ENCODE measurements at regions of chr5 and their contacts with region 1.

Region 1: DNA sequence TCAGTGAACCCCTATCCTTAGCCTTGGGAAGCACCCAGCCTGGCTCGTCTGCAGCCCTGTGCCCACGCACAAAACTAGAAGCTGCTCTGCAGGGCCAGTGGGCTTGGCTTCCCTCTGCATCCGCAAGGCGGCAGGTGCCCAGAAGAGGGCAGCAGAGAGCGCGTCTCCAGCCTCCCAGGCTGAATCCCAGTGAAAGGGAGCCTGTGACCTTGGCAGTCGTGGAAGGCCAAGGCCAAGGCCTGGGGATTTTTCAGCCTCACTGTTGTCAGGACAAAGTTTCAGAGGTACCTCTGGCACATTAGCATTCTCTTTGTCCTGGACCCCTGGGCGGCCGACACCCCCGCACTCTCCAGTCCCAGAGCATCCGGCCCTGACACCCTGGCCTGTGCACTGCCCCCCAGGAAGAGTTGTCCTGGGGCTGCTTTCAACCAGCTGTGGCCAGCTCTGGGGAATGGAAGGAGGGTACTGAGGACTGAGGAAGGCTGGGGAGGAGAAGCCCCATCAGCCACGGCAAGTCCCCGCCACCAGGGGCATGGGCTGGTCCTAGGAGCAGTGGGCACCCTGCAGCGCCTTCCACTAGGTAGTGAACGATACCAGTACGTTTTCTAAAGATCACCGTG is 63.6 kb upstream of the IL17B start:
- DNase-seq: peak; percentile 44
- H3K4me3 ChIP-seq: no peak overlapping the region
- H3K27ac ChIP-seq: peak overlapping the region; percentile 0
- H3K27me3 ChIP-seq: peaks cover 2% of the 10 kb centered on the region
- CTCF ChIP-seq: peak; percentile 93

Region 2: DNA sequence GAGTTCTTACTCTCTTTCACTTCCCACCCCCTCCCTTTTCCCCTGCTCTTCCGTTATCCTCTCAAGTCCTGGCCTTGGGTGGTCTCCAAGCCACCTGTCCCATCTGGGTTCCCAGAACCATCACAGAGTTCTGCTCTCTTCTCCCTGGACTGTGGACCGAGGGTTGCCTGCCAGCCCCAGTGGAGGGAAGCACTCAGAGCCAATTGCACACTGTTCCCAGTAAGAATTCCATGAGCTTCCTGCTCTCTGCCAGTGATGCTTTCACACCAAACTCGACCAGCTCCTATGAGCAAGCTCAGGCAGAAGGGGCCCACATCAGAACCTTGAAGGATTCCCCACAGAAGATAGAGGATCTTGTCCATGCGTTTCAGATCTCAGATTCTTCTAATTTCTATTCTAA is 191.1 kb before region 1 on chr5:
- CTCF ChIA-PET with region 1: no interaction called
- POLR2A ChIA-PET with region 1: no interaction called
- DNase-seq: no peak
- H3K4me3 ChIP-seq: no peak overlapping the region
- H3K27ac ChIP-seq: no peak overlapping the region
- H3K27me3 ChIP-seq: no peaks in the 10 kb centered on the region
- CTCF ChIP-seq: no peak

Region 3: DNA sequence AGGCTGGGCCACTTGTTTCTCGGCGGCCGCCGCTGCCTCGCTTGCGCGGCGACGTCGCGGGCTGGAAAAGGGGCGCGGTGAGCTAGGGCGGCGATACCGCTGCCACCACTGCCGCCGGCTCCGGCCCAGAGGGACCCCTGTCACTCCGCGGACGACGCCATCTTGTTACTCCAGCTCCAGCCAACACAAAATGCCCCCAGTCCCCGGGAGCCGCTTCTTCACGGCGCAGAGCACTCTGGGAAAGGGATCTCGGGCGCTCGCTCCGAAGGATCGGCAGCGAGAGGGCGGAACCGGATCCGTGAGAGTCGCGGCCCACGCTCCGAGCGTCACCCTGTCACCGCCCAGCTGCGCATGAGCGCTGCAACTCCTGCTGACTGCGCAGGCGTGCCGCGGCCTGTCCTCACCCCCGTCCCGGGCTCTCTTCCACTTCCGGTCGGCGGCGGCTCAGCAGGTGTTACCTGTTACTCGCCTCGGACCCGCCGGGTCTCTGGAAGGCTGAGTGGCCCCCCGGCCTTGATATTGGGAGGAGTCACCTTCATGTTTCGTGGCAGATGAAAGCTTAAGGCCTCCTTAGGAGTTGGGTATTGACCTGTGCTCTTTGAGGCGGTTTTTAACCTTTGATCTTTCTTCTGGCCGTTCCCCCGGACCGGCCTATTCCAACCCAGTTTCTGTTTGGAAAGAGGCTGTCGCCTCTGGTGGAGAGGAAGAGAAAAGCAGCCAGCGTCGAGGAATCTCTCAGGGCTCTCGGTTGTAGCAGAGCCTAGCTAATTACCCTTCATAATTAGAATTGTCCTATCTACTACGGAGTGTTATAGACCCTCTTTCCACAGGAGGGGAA is 108.7 kb after region 1 on chr5 and contains the start of gene CSNK1A1:
- CTCF ChIA-PET with region 1: interaction called, 35 read pairs
- POLR2A ChIA-PET with region 1: interaction called, 3 read pairs
- DNase-seq: peak; percentile 97
- H3K4me3 ChIP-seq: peak within 1 kb of the TSS; percentile 96
- H3K27ac ChIP-seq: peak within 1 kb of the TSS; percentile 91
- H3K27me3 ChIP-seq: no peaks in the 10 kb centered on the region
- CTCF ChIP-seq: peak; percentile 86
- polyA plus RNA-seq, gene CSNK1A1: 260 and 329 TPM in 2 replicates

Region 4: GRCh38 chr5:149567226-149567625 is 124.6 kb after region 1 on chr5:
- CTCF ChIA-PET with region 1: interaction called, 48 read pairs
- POLR2A ChIA-PET with region 1: interaction called, 10 read pairs
- DNase-seq: no peak
- H3K4me3 ChIP-seq: no peak overlapping the region
- H3K27ac ChIP-seq: no peak overlapping the region
- H3K27me3 ChIP-seq: no peaks in the 10 kb centered on the region
- CTCF ChIP-seq: no peak

Measured in AG04450 (cell line).